ENCODE measurements at regions of chr12 and their contacts with region 1.

Region 1: GRCh38 chr12:32482226-32482625 is 82.9 kb downstream of the FGD4 start:
- DNase-seq: no peak
- H3K4me3 ChIP-seq: no peak overlapping the region
- H3K27ac ChIP-seq: peak overlapping the region in 2 of 4 donors; percentile 13 to 20
- H3K4me1 ChIP-seq: peaks cover 5 to 25% (median 7%) of the 10 kb centered on the region in 4 donors
- H3K27me3 ChIP-seq: no peaks in the 10 kb centered on the region
- CTCF ChIP-seq: no peak
- EP300 ChIP-seq: no peak
- POLR2A ChIP-seq: no peak

Region 2: GRCh38 chr12:32586390-32586789 is 104.2 kb after region 1 on chr12:
- in situ Hi-C with region 1: loop called in 1 of 4 experiments (anchors 25 kb)
- intact Hi-C with region 1: no loop called
- DNase-seq: no peak
- H3K4me3 ChIP-seq: no peak overlapping the region
- H3K27ac ChIP-seq: no peak overlapping the region
- H3K4me1 ChIP-seq: peaks cover 0 to 9% (median 0%) of the 10 kb centered on the region in 4 donors
- H3K27me3 ChIP-seq: no peaks in the 10 kb centered on the region
- CTCF ChIP-seq: no peak
- EP300 ChIP-seq: no peak
- POLR2A ChIP-seq: no peak

Measured in transverse colon (tissue), 4 donors.